GM12878 (cell line): ENCODE measurements at regions of chr3 and their contacts with region 1.

Region 1: GRCh38 chr3:75171630-75172230 is 492.4 kb upstream of the FRG2C start:
- DNase-seq: no peak
- ATAC-seq: peak; percentile 31
- H3K4me3 ChIP-seq: no peak overlapping the region
- H3K27ac ChIP-seq: no peak overlapping the region
- H3K4me1 ChIP-seq: no peaks in the 10 kb centered on the region
- H3K27me3 ChIP-seq: no peaks in the 10 kb centered on the region
- CTCF ChIP-seq: peak; percentile 13 to 50 (median 29); a peak in 2 of 6 replicates
- EP300 ChIP-seq: no peak
- POLR2A ChIP-seq: no peak
- RAD21 ChIP-seq: peak; percentile 39; the same call in 1 of the 2 replicates

Region 2: GRCh38 chr3:74267588-74268184 is 904.0 kb before region 1 on chr3:
- CTCF ChIA-PET with region 1: interaction called, 25 read pairs
- POLR2A ChIA-PET with region 1: no interaction called
- RAD21 ChIA-PET with region 1: no interaction called
- SMC1A ChIA-PET with region 1: interaction called, 17 read pairs
- in situ Hi-C with region 1: no loop called
- intact Hi-C with region 1: loop called (anchors 2 kb)
- DNase-seq: no peak
- ATAC-seq: peak; percentile 66
- H3K4me3 ChIP-seq: no peak overlapping the region
- H3K27ac ChIP-seq: no peak overlapping the region
- H3K4me1 ChIP-seq: no peaks in the 10 kb centered on the region
- H3K27me3 ChIP-seq: no peaks in the 10 kb centered on the region
- CTCF ChIP-seq: peak; percentile 53 to 72 (median 70)
- EP300 ChIP-seq: no peak
- POLR2A ChIP-seq: no peak
- RAD21 ChIP-seq: peak; percentile 63

Region 3: GRCh38 chr3:74643636-74644035 is 528.1 kb before region 1 on chr3:
- CTCF ChIA-PET with region 1: no interaction called
- POLR2A ChIA-PET with region 1: no interaction called
- RAD21 ChIA-PET with region 1: no interaction called
- SMC1A ChIA-PET with region 1: no interaction called
- in situ Hi-C with region 1: no loop called
- intact Hi-C with region 1: loop called (anchors 10 kb)
- DNase-seq: no peak
- ATAC-seq: no peak
- H3K4me3 ChIP-seq: no peak overlapping the region
- H3K27ac ChIP-seq: no peak overlapping the region
- H3K4me1 ChIP-seq: no peaks in the 10 kb centered on the region
- H3K27me3 ChIP-seq: no peaks in the 10 kb centered on the region
- CTCF ChIP-seq: no peak
- EP300 ChIP-seq: no peak
- POLR2A ChIP-seq: no peak
- RAD21 ChIP-seq: no peak

Region 4: DNA sequence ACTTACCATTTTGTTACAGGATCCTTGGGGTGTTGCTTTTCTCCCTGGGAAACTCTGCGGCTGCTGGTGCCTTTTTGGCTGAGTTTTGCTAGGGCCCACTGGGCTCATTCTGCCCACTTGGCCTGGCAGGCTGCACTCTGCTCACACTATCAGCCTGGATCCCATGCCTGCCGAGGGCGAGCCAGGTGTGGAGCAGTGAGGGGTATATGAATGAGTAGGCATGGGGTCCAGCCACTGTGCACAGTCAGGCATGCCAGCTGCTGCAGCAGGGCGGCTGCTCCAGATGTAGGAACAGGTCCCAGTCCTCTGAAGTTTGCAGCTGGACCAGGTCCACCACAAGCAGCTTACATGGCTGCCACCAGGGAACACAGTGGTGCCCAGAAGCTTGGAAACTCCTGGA is 420.8 kb before region 1 on chr3:
- CTCF ChIA-PET with region 1: no interaction called
- POLR2A ChIA-PET with region 1: no interaction called
- RAD21 ChIA-PET with region 1: no interaction called
- SMC1A ChIA-PET with region 1: no interaction called
- in situ Hi-C with region 1: no loop called
- intact Hi-C with region 1: no loop called
- DNase-seq: no peak
- ATAC-seq: no peak
- H3K4me3 ChIP-seq: no peak overlapping the region
- H3K27ac ChIP-seq: no peak overlapping the region
- H3K4me1 ChIP-seq: no peaks in the 10 kb centered on the region
- H3K27me3 ChIP-seq: no peaks in the 10 kb centered on the region
- CTCF ChIP-seq: no peak
- EP300 ChIP-seq: no peak
- POLR2A ChIP-seq: no peak
- RAD21 ChIP-seq: no peak

Region 5: DNA sequence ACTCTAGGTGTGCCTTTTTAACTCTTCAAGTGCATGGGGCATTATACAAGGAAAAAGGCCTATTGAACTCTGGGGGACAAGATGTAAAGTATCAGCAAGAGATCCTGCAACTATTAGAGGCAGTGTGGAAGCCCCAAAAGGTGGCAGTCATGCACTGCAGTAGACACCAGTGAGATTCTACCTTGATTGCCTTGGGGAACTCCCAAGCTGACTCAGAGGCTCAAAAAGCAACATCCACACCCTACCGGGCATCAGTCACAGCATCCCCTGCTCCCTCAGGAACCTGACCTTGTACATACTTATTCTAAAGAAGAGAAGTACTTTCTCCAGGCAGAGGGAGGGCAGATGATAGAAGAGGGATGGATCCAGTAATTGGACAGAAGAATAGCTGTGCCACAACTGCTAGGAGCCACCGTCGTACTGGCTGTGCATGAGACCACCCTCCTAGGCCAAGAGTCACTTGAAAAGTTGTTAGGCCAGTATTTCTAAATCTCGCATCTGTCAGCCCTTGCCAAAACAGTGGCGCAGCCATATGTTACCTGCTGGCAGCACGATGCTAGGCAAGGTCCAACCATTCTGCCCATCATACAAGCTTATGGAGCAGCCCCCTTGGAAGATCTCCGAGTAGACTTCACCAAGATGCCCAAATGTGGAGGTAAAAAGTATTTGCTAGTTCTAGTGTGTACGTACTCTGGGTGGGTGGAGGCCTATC is 30.7 kb before region 1 on chr3:
- CTCF ChIA-PET with region 1: interaction called, 75 read pairs
- POLR2A ChIA-PET with region 1: no interaction called
- RAD21 ChIA-PET with region 1: interaction called, 98 read pairs
- SMC1A ChIA-PET with region 1: interaction called, 71 read pairs
- in situ Hi-C with region 1: no loop called
- intact Hi-C with region 1: no loop called
- DNase-seq: no peak
- ATAC-seq: peak; percentile 78
- H3K4me3 ChIP-seq: no peak overlapping the region
- H3K27ac ChIP-seq: no peak overlapping the region
- H3K4me1 ChIP-seq: no peaks in the 10 kb centered on the region
- H3K27me3 ChIP-seq: no peaks in the 10 kb centered on the region
- CTCF ChIP-seq: peak in 2 of 3 experiments; percentile 22 to 44; a peak in 3 of 6 replicates
- EP300 ChIP-seq: no peak
- POLR2A ChIP-seq: no peak
- RAD21 ChIP-seq: peak; percentile 35; the same call in 1 of the 2 replicates